Gastrocnemius medialis (tissue), 4 donors: ENCODE measurements at regions of chr2 and their contacts with region 1.

Region 1: GRCh38 chr2:235595422-235596010 is 101.7 kb downstream of the AGAP1 start:
- DNase-seq: peak; percentile 21 to 60
- ATAC-seq: peak; percentile 54 to 67
- H3K4me3 ChIP-seq: no peak overlapping the region
- H3K27ac ChIP-seq: no peak overlapping the region
- H3K4me1 ChIP-seq: peaks cover 0 to 5% of the 10 kb centered on the region in 2 donors
- H3K27me3 ChIP-seq: no peaks in the 10 kb centered on the region
- CTCF ChIP-seq: peak; percentile 79 to 85 (median 83)
- POLR2A ChIP-seq: no peak

Region 2: DNA sequence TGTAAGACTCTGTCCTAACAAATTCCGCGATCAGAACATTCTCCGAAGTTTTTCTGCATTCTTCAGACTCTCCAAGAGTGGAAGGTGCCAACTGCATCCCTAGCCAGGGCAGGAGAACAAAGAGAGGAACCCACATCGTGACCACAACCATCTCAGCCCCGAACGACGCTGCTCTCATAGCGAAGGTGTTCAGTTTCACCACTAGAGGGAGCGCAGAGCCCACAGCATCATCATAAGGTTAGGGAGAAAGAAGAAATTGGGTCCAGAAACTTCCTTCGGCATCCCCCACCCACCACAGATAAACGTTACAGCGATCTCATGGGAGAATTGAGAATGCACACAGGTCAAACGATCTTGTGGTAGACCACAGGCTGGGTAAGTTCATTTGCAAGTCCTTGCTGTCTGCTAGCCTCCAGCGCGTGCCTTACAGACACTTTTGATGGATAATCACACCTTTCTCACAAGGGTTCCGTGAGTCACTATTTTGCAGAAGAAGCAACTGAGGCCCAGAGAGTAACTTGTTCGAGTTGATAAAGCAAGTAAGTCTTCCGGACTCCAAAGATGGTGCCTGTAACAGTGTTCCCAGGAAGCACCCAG is 1044.9 kb before region 1 on chr2:
- in situ Hi-C with region 1: loop called in 2 of 4 experiments (anchors 25 kb)
- intact Hi-C with region 1: no loop called
- DNase-seq: peak; percentile 26 to 42
- ATAC-seq: peak; percentile 45 to 73
- H3K4me3 ChIP-seq: no peak overlapping the region
- H3K27ac ChIP-seq: no peak overlapping the region
- H3K4me1 ChIP-seq: no peaks in the 10 kb centered on the region
- H3K27me3 ChIP-seq: peaks cover 0 to 2% (median 0%) of the 10 kb centered on the region in 3 donors
- CTCF ChIP-seq: peak; percentile 76 to 94 (median 84)
- POLR2A ChIP-seq: no peak

Region 3: DNA sequence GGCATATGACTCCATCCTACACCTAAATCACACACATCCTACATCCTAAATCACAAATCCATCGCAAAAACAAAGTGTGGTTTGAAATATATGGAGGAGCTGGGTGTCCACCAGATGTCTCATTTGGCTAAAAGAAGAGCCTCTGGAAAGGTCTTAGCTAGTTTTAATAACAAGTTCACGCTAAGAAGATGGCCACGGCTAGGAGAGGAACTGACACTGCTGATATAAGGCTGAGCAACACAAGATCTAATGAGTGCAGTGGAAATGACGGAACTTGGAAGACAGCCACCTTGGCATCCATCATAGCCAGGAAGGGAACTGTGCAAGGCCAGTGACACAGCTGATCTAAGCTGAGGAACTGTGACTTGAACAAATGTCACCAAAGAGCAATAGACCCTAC is 161.7 kb before region 1 on chr2:
- in situ Hi-C with region 1: loop called in 1 of 4 experiments (anchors 10 kb)
- intact Hi-C with region 1: loop called (anchors 2 kb)
- DNase-seq: peak; percentile 34 to 72
- ATAC-seq: peak; percentile 85 to 90
- H3K4me3 ChIP-seq: no peak overlapping the region
- H3K27ac ChIP-seq: peak overlapping the region; percentile 31 to 56 (median 48)
- H3K4me1 ChIP-seq: peaks cover 18 to 19% of the 10 kb centered on the region in 2 donors
- H3K27me3 ChIP-seq: no peaks in the 10 kb centered on the region
- CTCF ChIP-seq: peak in 2 of 5 experiments; percentile 23 to 25
- POLR2A ChIP-seq: no peak

Region 4: GRCh38 chr2:235669269-235669831 is 73.8 kb after region 1 on chr2:
- in situ Hi-C with region 1: no loop called
- intact Hi-C with region 1: loop called (anchors 1 kb)
- DNase-seq: peak; percentile 33 to 58
- ATAC-seq: peak; percentile 64 to 66
- H3K4me3 ChIP-seq: peak overlapping the region; percentile 38 to 49 (median 46)
- H3K27ac ChIP-seq: no peak overlapping the region
- H3K4me1 ChIP-seq: peaks cover 14 to 22% of the 10 kb centered on the region in 2 donors
- H3K27me3 ChIP-seq: no peaks in the 10 kb centered on the region
- CTCF ChIP-seq: peak in 1 of 5 experiments; percentile 26
- POLR2A ChIP-seq: no peak

Region 5: GRCh38 chr2:235740821-235741220 is 145.3 kb after region 1 on chr2:
- in situ Hi-C with region 1: loop called (anchors 5 to 10 kb)
- intact Hi-C with region 1: loop called (anchors 1 kb)
- DNase-seq: no peak
- ATAC-seq: no peak
- H3K4me3 ChIP-seq: no peak overlapping the region
- H3K27ac ChIP-seq: no peak overlapping the region
- H3K4me1 ChIP-seq: no peaks in the 10 kb centered on the region
- H3K27me3 ChIP-seq: no peaks in the 10 kb centered on the region
- CTCF ChIP-seq: peak in 2 of 5 experiments; percentile 15 to 22
- POLR2A ChIP-seq: no peak